Activated CD8-positive, alpha-beta T cell treated with anti-CD3 and anti-CD28 coated beads, Interleukin-2, amount 10 ng/mL, durations not matched to agents 7 days and 5 days (primary cell): ENCODE measurements at regions of chr15 and their contacts with region 1.

Region 1: DNA sequence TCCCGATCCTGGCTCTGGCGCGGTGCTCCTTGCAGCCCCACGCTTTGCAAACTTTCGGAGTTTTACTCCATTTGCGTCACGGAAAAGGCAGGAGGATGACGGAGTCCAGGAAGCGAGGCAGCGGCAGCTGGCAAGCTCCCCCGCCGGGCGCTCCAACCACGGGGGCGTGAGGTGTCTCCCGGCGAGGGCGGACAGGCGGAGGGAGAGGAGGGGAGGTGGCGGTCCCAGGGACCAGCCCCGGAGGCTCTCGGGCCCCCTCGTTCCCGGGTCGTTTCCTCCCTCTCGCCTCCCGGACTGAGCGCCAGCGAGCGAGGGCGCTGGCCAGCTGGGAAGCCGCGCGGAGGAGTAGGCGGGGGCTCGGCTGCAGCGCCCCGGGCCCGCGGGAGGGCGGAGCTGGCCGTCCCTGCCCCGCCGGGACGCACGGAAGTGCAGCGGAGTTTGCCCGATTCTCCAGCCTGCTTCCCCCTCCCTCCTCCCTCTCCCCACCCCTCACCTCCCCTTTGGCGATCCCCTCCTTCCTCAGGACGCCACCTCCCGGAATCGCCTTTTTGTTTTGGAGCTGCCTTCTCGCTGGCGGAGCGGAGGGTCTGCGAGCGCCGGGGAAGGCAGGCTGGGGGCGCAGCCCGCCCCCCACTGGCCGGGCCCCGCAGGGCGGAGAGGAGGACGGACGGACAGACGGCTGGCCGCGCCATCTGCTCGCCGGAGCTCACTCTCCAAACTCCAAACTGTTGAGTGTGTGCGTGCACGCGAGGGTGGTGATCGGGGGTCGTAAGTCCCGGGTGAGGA is at the start of gene SNX33:
- DNase-seq: peak; percentile 63
- ATAC-seq: peak; percentile 77
- H3K4me3 Mint-ChIP-seq: peak within 1 kb of the TSS; percentile 78
- H3K27ac Mint-ChIP-seq: peak within 1 kb of the TSS; percentile 68
- H3K4me1 Mint-ChIP-seq: peaks cover 29% of the 10 kb centered on the region
- H3K27me3 Mint-ChIP-seq: peaks cover 17% of the 10 kb centered on the region
- total RNA-seq, gene SNX33: 0.55 to 0.70 TPM

Region 2: DNA sequence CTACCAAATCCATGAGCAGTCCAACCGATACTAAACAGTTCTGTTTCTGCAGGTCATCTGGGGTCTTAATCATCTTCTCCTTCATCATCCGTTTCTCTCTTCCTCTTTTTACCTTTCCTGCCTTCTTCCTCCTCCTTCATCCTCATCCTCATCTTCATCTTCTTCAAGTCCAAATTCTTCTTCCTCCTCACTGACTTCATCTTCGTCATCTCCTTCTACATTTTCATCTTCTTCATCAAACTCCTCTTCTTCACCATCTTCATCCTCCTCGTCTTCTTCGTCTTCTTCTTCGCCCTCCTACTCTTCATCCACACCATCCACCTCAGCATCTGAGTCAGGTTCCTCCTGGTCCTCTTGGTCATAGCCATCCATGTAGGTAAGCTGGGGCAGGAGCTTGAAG is 325.9 kb before region 1 on chr15:
- CTCF ChIA-PET with region 1: no interaction called
- POLR2A ChIA-PET with region 1: no interaction called
- DNase-seq: no peak
- ATAC-seq: no peak
- H3K4me3 Mint-ChIP-seq: no peak overlapping the region
- H3K27ac Mint-ChIP-seq: no peak overlapping the region
- H3K4me1 Mint-ChIP-seq: no peaks in the 10 kb centered on the region
- H3K27me3 Mint-ChIP-seq: peaks cover 9% of the 10 kb centered on the region

Region 3: DNA sequence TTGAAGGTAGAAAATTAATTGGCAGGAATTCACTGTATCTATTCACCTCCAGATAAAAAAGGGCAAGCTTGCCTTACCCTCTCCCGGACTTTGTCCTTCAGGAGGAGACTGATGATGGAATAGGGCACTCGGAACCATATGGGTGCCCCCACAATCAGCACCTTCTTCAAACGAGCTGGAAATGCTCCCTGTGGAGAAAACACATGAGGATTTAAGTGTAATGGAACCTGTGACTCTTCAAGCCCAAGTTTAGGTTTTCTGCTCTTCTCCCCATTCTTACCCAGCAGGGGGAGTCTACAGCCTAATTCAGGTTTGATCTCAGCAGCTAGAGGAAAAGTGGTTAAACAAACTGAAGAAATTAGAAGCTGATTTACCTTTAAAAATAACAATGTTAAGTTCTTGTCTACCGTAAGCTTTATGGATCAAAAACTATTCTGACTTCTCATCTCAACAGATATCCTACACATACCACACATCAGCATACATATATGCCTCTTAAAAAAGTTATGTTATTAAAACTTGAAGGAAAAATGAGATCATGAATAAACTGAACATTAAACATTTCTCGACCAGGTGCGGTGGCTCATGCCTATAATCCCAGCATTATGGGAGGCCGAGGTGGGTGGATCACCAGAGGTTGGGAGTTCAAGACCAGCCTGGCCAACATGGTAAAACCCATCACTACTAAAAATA is 138.6 kb before region 1 on chr15:
- CTCF ChIA-PET with region 1: interaction called, 30 read pairs
- POLR2A ChIA-PET with region 1: no interaction called
- DNase-seq: peak; percentile 47
- ATAC-seq: peak; percentile 42
- H3K4me3 Mint-ChIP-seq: no peak overlapping the region
- H3K27ac Mint-ChIP-seq: peak overlapping the region; percentile 8
- H3K4me1 Mint-ChIP-seq: no peaks in the 10 kb centered on the region
- H3K27me3 Mint-ChIP-seq: no peaks in the 10 kb centered on the region

Region 4: GRCh38 chr15:75590239-75590638 is 57.3 kb before region 1 on chr15:
- CTCF ChIA-PET with region 1: no interaction called
- POLR2A ChIA-PET with region 1: no interaction called
- DNase-seq: no peak
- ATAC-seq: no peak
- H3K4me3 Mint-ChIP-seq: no peak overlapping the region
- H3K27ac Mint-ChIP-seq: peak overlapping the region; percentile 16
- H3K4me1 Mint-ChIP-seq: peaks cover 19% of the 10 kb centered on the region
- H3K27me3 Mint-ChIP-seq: no peaks in the 10 kb centered on the region